Transverse colon (tissue), 4 donors: ENCODE measurements at regions of chr20 and their contacts with region 1.

Region 1: GRCh38 chr20:4014031-4014474 is 1.3 kb downstream of the RNF24 start:
- DNase-seq: peak; percentile 68
- H3K4me3 ChIP-seq: peak overlapping the region in 2 of 4 donors; percentile 80 to 93
- H3K27ac ChIP-seq: peak overlapping the region; percentile 82 to 89 (median 88)
- H3K4me1 ChIP-seq: peaks cover 0 to 41% (median 19%) of the 10 kb centered on the region in 4 donors
- H3K27me3 ChIP-seq: no peaks in the 10 kb centered on the region
- CTCF ChIP-seq: peak; percentile 47 to 74 (median 54)
- EP300 ChIP-seq: no peak
- POLR2A ChIP-seq: no peak

Region 2: GRCh38 chr20:3888622-3889488 is 125.2 kb before region 1 on chr20 and contains the start of gene PANK2:
- in situ Hi-C with region 1: loop called in 1 of 4 experiments (anchors 10 kb)
- intact Hi-C with region 1: no loop called
- DNase-seq: peak; percentile 99
- H3K4me3 ChIP-seq: peak within 1 kb of the TSS; percentile 87 to 100 (median 96)
- H3K27ac ChIP-seq: peak within 1 kb of the TSS; percentile 93 to 100 (median 98)
- H3K4me1 ChIP-seq: peaks cover 19 to 47% (median 37%) of the 10 kb centered on the region in 4 donors
- H3K27me3 ChIP-seq: no peaks in the 10 kb centered on the region
- CTCF ChIP-seq: peak; percentile 40 to 75 (median 48)
- EP300 ChIP-seq: no peak
- POLR2A ChIP-seq: peak; percentile 90
- total RNA-seq, gene PANK2: 22.9 to 48.7 (median 38.2) TPM

Region 3: DNA sequence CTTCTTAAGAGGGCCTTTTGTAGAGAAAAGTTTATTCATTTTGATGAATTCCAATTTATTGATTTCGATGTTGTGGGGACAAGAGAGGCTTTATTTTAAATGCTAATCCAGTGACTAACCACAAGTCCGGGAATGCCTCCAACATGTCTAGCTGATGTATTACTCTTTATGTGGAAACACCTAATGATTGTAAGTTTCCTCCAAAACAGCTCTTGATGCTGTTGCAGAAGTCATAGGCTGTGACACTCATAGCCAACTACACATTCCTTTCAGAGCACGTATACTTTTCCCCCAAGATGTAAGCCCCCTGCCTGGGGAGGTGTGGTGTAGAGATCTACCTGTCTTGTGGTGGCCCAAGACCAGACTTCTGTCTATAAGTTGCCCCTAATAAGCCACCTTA is 62.6 kb after region 1 on chr20:
- in situ Hi-C with region 1: loop called in 2 of 4 experiments (anchors 10 kb)
- intact Hi-C with region 1: no loop called
- DNase-seq: no peak
- H3K4me3 ChIP-seq: no peak overlapping the region
- H3K27ac ChIP-seq: no peak overlapping the region
- H3K4me1 ChIP-seq: no peaks in the 10 kb centered on the region
- H3K27me3 ChIP-seq: no peaks in the 10 kb centered on the region
- CTCF ChIP-seq: no peak
- EP300 ChIP-seq: no peak
- POLR2A ChIP-seq: no peak

Region 4: GRCh38 chr20:4082406-4083097 is 68.5 kb after region 1 on chr20:
- in situ Hi-C with region 1: loop called in 2 of 4 experiments (anchors 10 kb)
- intact Hi-C with region 1: loop called (anchors 2 kb)
- DNase-seq: peak; percentile 32
- H3K4me3 ChIP-seq: no peak overlapping the region
- H3K27ac ChIP-seq: peak overlapping the region; percentile 25 to 58 (median 51)
- H3K4me1 ChIP-seq: peaks cover 0 to 9% (median 3%) of the 10 kb centered on the region in 4 donors
- H3K27me3 ChIP-seq: no peaks in the 10 kb centered on the region
- CTCF ChIP-seq: no peak
- EP300 ChIP-seq: no peak
- POLR2A ChIP-seq: no peak